ENCODE measurements at regions of chr1 and their contacts with region 1.

Region 1: DNA sequence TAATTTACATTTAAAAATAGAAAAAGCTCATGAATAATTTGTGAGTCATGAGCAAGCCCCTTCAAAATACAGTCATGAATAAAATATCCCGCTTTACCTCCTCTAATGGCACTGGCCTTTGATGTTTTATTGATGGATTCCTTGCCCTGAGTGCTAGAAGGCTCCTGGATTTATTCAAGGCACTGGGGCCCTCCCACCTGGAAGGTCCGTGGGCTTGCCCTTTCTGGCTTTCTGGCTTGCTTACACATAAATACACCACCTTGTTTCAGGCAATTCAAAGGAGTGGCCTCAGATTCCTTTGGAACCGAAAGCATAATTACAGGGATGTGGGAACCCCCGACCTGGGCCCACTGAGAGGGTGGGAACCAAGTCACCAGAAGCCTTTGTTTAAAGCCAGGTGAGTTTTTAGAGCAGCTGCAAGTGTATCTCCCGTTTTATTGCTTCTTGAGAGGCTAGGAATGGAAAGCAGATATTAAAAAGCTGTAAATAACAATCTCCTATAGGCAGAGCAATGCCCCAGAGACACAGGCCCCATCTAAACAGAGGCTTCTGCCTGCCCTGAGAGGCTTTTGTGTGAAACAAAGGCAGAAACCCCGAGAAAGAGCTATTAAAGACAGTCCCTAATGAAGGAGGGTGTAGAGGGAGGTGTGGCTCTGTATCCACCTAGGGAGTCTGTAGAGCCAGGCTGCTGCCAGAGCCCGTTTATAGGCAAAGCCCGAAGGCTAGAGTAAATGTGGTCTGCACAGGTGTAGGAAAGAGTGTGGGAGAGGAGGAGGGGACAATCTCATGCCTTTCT is 126.4 kb downstream of the FAM78B start:
- DNase-seq: no peak
- CTCF ChIP-seq: no peak

Region 2: GRCh38 chr1:165974598-165975131 is 65.7 kb before region 1 on chr1:
- in situ Hi-C with region 1: no loop called
- DNase-seq: no peak
- CTCF ChIP-seq: no peak

Region 3: GRCh38 chr1:165999826-166000225 is 40.6 kb before region 1 on chr1:
- in situ Hi-C with region 1: loop called (anchors 5 kb)
- DNase-seq: no peak
- CTCF ChIP-seq: no peak

Measured in GM13976 (cell line).